ENCODE measurements at regions of chr5 and their contacts with region 1.

Region 1: GRCh38 chr5:1763548-1763911 is 36.1 kb downstream of the MRPL36 start:
- DNase-seq: peak; percentile 85
- H3K4me3 ChIP-seq: peak overlapping the region; percentile 58
- H3K27ac ChIP-seq: no peak overlapping the region
- H3K4me1 ChIP-seq: no peaks in the 10 kb centered on the region
- H3K27me3 ChIP-seq: peaks cover 17% of the 10 kb centered on the region

Region 2: DNA sequence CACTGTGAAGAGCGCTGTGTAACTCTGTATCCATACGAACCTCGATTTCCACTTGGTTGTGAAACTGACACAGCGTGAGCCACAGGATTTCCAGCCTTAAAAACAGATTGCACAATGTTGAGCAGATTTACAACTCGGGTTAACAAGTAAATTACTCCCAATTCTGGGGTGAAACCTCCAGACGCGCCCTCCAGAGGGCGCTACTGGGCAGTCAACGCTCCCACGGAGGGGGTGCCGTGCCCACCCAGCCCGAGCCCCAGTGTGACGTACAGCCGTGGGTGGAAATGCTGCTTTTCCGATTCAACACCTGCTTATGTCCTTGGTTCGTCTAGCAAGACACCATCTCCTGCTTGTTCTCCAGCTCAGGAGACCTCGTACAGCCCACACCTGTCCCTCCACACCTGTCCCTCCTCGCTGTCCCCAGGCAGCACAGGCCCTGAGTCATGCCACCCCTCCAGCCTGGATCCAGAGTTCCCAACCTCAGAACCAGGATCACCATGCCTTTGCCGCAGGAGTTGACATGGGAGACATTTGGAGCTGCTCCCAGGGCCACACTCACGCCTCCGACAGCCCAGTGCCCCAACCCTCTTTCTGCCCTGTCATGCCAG is 283.8 kb before region 1 on chr5:
- in situ Hi-C with region 1: no loop called
- DNase-seq: peak; percentile 77
- H3K4me3 ChIP-seq: no peak overlapping the region
- H3K27ac ChIP-seq: peak overlapping the region; percentile 3; the same call in 1 of the 2 replicates
- H3K4me1 ChIP-seq: no peaks in the 10 kb centered on the region
- H3K27me3 ChIP-seq: no peaks in the 10 kb centered on the region

Region 3: DNA sequence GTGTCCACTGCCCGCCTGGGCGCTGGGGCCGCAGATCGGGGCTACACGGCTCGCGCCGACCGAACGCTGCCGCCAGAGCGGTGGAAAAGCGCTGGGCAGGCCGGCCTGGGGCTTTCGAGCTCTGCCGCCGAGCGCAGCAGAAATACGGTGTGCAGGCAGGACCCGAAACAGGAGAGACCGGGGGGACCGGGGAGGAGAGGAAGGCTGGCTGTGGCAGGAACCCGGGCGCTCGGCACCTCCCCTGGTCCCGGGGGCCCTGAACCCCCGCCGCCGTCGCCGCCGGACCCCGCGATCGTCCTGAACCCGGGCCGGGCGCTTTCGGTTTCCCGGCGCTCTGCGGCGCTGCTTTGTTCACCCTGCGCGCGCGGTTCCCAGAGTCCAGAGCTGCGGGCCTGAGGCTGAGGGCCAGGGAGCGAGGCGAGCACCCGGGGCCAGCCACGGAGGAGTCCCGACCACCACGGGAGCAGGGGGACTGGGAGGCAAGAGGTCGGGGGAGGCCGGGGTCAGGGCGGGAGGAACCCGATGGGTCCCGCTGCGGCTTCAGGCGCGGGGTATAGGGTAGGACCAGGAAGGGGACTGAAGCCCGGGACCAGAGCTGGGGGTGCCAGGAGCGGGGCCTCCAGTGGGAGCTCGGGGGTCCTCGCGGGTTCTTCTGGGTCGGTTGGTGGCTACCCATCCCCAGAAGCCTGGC is 976.0 kb after region 1 on chr5:
- in situ Hi-C with region 1: loop called (anchors 25 kb)
- DNase-seq: peak; percentile 85
- H3K4me3 ChIP-seq: peak overlapping the region; percentile 77
- H3K27ac ChIP-seq: peak overlapping the region; percentile 84
- H3K4me1 ChIP-seq: peaks cover 43% of the 10 kb centered on the region
- H3K27me3 ChIP-seq: no peaks in the 10 kb centered on the region

Region 4: DNA sequence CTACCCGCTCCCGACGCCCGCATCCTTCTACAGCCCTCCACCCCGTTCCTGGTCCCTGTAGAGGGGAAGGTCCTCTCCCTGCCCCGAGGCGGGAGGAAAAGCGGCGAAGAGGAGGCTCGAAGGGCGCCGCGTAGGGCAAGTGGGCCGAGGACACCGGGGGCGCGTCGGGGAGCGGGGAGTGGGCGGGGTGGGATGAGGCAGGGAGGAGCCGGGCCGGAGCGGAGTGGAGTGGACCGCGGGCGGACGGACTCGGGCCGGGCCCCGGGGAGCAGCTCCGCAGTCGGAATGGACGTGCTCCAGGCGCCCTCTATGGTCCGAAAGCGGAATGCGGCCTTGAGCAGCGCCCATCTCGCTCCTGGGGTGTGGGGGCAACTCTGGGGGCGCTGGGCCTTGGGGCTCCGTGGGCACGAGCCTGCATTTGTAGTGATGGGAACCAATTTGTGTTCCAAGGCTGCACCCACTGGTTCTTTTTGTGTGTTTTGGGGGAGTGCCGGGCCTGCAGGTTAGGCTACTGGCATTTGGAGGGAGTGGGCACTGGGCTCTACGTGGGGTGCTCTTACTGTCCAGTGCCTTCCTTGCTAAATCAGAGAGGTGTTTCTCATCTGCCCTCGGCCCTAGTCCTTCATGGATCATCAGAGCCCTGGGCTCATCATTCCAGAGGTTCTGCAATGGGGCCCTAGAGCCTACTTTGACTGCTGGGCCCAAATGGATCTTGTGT is 1839.4 kb after region 1 on chr5:
- in situ Hi-C with region 1: loop called (anchors 25 kb)
- DNase-seq: peak; percentile 91
- H3K4me3 ChIP-seq: peak overlapping the region; percentile 84
- H3K27ac ChIP-seq: peak overlapping the region; percentile 78
- H3K4me1 ChIP-seq: peaks cover 40% of the 10 kb centered on the region
- H3K27me3 ChIP-seq: no peaks in the 10 kb centered on the region